Activated CD4-positive, alpha-beta memory T cell treated with anti-CD3 and anti-CD28 coated beads, Interleukin-2, amount 10 ng/mL, durations not matched to agents 7 days and 5 days (primary cell): ENCODE measurements at regions of chr1 and their contacts with region 1.

Region 1: DNA sequence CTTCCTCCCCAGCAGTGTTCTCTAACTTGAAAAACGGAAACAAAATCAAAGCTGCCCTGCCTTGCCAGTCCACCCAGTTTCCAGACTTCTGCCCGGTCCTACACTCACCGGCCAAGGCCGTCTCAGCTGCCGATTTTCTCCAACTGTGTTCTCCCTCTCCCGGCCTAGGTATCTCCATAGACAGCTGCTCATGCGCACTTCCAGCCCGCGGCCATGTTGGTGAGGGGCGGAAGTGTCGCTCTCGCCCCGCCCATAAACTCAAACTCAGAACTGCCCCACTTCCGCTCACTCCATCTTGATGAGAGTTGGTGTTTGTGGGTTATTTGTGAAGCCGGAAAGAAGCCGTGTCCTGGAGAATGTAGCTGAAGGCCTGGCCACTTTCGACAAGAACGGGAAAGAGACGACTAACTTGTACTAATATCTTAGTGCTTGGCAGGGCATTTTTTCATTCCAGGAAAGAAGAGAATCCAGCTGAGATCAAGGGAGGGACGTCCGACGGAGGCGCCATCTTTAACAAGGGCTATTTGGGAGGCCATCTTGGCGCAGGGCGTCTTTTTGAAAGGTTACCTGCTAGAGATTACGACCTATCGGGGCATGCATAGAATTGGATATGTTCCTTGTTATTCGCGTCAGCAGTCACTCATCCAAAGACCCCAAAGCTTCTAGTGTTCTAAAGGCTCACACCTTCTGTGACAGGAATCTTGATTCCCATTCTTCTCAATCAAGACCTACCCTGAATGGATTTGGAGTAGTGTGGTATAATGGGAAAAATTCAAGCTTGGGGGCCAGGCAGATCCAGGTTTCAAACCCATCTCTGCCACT is at the start of gene USF1:
- DNase-seq: peak; percentile 96
- H3K4me3 Mint-ChIP-seq: peak within 1 kb of the TSS; percentile 88
- H3K27ac Mint-ChIP-seq: peak within 1 kb of the TSS; percentile 97
- H3K4me1 Mint-ChIP-seq: peaks cover 58% of the 10 kb centered on the region
- H3K27me3 Mint-ChIP-seq: no peaks in the 10 kb centered on the region
- total RNA-seq, gene USF1: 67.4 to 68.0 TPM

Region 2: GRCh38 chr1:161013488-161014230 is 32.3 kb before region 1 on chr1:
- CTCF ChIA-PET with region 1: interaction called, 12 read pairs
- POLR2A ChIA-PET with region 1: interaction called, 21 read pairs
- DNase-seq: peak; percentile 75
- H3K4me3 Mint-ChIP-seq: peak overlapping the region; percentile 66
- H3K27ac Mint-ChIP-seq: peak overlapping the region; percentile 94
- H3K4me1 Mint-ChIP-seq: peaks cover 35% of the 10 kb centered on the region
- H3K27me3 Mint-ChIP-seq: no peaks in the 10 kb centered on the region

Region 3: GRCh38 chr1:161082991-161083742 is 37.2 kb after region 1 on chr1:
- CTCF ChIA-PET with region 1: no interaction called
- POLR2A ChIA-PET with region 1: interaction called, 16 read pairs
- DNase-seq: no peak
- H3K4me3 Mint-ChIP-seq: no peak overlapping the region
- H3K27ac Mint-ChIP-seq: no peak overlapping the region
- H3K4me1 Mint-ChIP-seq: peaks cover 11% of the 10 kb centered on the region
- H3K27me3 Mint-ChIP-seq: peaks cover 2% of the 10 kb centered on the region

Region 4: DNA sequence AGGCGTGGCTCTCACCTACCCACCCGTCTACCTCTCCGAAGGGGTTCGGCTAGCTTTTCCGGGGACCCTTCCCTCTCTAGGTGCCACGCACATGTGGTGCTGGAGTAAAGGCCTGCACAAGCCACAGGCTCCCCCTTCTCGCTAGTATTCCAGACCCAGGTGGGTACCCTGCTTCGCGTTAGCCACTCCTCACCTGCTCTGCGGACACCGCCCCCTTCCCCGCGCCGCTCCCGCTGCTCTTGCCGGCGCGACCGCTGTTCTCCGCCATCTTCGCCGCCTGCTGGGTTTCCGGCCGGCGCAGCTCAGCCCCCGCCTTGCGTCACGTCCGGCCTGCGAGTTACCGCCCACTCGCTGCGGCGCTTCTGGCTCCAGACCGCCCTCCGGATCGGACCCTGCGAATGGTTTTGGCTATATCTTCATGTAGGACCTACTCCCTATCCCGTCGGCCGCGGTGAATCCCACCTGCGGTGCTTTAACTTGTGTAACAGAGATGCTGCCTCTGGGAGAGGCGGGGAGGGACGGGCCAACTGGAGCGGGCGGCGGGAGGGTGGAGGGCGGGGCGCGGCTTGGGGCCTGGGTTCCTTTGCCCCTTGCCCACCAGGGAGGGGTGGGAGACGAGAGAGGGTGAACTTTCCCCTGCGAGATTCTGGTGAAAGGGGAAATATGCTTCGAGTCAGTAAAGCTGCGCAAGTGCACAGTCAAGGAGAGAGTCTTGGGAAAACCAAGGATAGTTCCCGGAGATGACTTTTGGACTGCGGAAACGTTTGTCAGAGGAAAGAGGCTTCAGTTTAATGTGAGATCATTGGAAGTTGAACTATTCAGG is 72.0 kb after region 1 on chr1 and contains the starts of genes NIT1 and PFDN2:
- CTCF ChIA-PET with region 1: interaction called, 3 read pairs
- POLR2A ChIA-PET with region 1: interaction called, 21 read pairs
- DNase-seq: peak; percentile 89
- H3K4me3 Mint-ChIP-seq: peak within 1 kb of the TSS; percentile 93
- H3K27ac Mint-ChIP-seq: peak within 1 kb of the TSS; percentile 95
- H3K4me1 Mint-ChIP-seq: peaks cover 66% of the 10 kb centered on the region
- H3K27me3 Mint-ChIP-seq: no peaks in the 10 kb centered on the region
- total RNA-seq, gene NIT1: 50.8 to 51.5 TPM
- total RNA-seq, gene PFDN2: 76.6 to 78.8 TPM

Region 5: GRCh38 chr1:161153679-161154426 is 107.9 kb after region 1 on chr1 and contains the start of gene UFC1:
- CTCF ChIA-PET with region 1: interaction called, 4 read pairs
- POLR2A ChIA-PET with region 1: interaction called, 19 read pairs
- DNase-seq: peak; percentile 85
- H3K4me3 Mint-ChIP-seq: peak within 1 kb of the TSS; percentile 92
- H3K27ac Mint-ChIP-seq: peak within 1 kb of the TSS; percentile 98
- H3K4me1 Mint-ChIP-seq: peaks cover 30% of the 10 kb centered on the region
- H3K27me3 Mint-ChIP-seq: no peaks in the 10 kb centered on the region
- total RNA-seq, gene UFC1: 103 to 113 TPM